ENCODE measurements at regions of chr1 and their contacts with region 1.

Region 1: DNA sequence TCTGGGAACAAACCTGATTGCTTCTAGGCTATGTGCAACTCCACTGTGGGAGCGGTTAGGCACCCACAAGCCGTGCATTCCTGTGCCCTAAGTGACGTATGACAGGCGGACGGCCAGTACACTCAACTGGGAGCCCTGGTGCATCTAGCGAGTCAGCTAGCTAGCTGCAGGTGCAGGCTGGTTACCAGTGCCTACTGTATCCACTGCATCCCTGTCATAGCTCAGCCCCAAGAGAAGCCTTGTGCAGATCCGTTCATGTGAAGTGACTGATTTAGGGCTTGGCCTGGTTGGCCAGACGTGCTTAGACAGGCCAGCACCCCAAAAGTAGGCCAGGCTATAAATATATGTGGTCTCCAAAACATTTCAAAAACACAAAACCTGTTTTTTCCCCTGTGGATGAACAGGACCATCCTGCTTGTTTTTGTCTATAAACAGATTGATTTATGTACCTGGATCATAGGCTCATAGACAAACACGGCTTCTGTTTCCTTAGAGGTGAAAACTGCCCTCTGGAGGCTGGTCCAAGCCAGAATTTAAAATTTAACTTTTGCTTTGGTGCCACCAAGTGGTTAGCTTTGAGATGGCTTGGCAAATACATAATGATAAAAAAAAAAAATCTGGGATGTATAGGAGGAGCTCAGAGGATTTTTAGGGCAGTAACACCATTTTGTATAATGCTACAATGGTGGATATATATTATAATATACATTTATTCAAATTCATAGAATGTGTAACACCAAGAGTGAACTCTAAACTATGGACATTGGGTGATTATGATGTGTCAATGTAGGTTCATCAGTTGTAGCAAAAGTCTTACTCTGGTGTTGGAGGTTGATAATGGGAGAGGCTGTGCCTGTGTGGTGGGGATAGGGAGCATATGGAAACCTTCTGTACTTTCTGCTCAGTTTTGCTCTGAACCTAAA is 68.5 kb downstream of the GIPC2 start:
- DNase-seq: peak; percentile 21 to 78 (median 52)
- ATAC-seq: peak; percentile 97
- H3K4me3 ChIP-seq: no peak overlapping the region
- H3K4me3 Mint-ChIP-seq: no peak overlapping the region
- H3K27ac ChIP-seq: no peak overlapping the region
- H3K27ac Mint-ChIP-seq: no peak overlapping the region
- H3K4me1 ChIP-seq: no peaks in the 10 kb centered on the region
- H3K4me1 Mint-ChIP-seq: no peaks in the 10 kb centered on the region
- H3K27me3 ChIP-seq: no peaks in the 10 kb centered on the region
- H3K27me3 Mint-ChIP-seq: no peaks in the 10 kb centered on the region
- CTCF ChIP-seq: peak; percentile 99

Region 2: GRCh38 chr1:76330991-76331603 is 1783.2 kb before region 1 on chr1:
- CTCF ChIA-PET with region 1: no interaction called
- POLR2A ChIA-PET with region 1: no interaction called
- intact Hi-C with region 1: loop called in 1 of 2 experiments (anchors 10 kb)
- DNase-seq: peak in 5 of 9 experiments; percentile 12 to 59 (median 33)
- ATAC-seq: peak; percentile 71
- H3K4me3 ChIP-seq: no peak overlapping the region
- H3K4me3 Mint-ChIP-seq: no peak overlapping the region
- H3K27ac ChIP-seq: no peak overlapping the region
- H3K27ac Mint-ChIP-seq: no peak overlapping the region
- H3K4me1 ChIP-seq: no peaks in the 10 kb centered on the region
- H3K4me1 Mint-ChIP-seq: peaks cover 4% of the 10 kb centered on the region
- H3K27me3 ChIP-seq: no peaks in the 10 kb centered on the region
- H3K27me3 Mint-ChIP-seq: no peaks in the 10 kb centered on the region
- CTCF ChIP-seq: peak; percentile 91

Region 3: DNA sequence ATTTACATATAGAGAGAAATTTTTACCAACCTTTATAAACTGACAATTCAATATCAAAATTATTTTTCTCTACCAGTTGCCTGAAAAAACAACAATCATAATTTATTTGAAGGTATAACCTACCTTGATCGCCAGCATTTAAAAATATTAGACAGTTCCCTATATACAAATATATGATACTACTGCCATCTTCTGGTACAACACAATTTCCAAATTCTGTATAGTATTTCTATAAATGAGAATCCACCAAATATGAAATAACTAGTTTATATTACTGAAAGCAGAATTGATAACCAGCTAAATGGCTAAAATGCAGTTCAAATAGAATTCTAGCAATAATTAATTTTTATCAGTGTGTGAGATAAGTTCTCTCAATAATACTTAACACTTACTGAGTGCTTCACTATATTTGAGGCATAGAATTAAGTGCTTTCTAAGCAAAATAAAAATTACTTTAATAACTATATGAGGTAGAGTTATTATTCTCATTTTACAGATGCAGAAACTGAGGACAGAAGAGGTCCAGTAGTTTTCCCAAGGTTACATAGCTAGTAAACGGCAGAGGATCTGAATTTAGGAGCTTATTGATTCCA is 970.7 kb before region 1 on chr1:
- CTCF ChIA-PET with region 1: no interaction called
- POLR2A ChIA-PET with region 1: no interaction called
- intact Hi-C with region 1: loop called (anchors 1 to 2 kb)
- DNase-seq: peak in 2 of 9 experiments; percentile 15 to 28
- ATAC-seq: no peak
- H3K4me3 ChIP-seq: no peak overlapping the region
- H3K4me3 Mint-ChIP-seq: no peak overlapping the region
- H3K27ac ChIP-seq: no peak overlapping the region
- H3K27ac Mint-ChIP-seq: no peak overlapping the region
- H3K4me1 ChIP-seq: peaks cover 6% of the 10 kb centered on the region
- H3K4me1 Mint-ChIP-seq: peaks cover 5% of the 10 kb centered on the region
- H3K27me3 ChIP-seq: no peaks in the 10 kb centered on the region
- H3K27me3 Mint-ChIP-seq: no peaks in the 10 kb centered on the region
- CTCF ChIP-seq: peak; percentile 53

Region 4: GRCh38 chr1:77718181-77718580 is 396.1 kb before region 1 on chr1:
- CTCF ChIA-PET with region 1: no interaction called
- POLR2A ChIA-PET with region 1: no interaction called
- intact Hi-C with region 1: loop called in 1 of 2 experiments (anchors 5 kb)
- DNase-seq: no peak
- ATAC-seq: no peak
- H3K4me3 ChIP-seq: no peak overlapping the region
- H3K4me3 Mint-ChIP-seq: no peak overlapping the region
- H3K27ac ChIP-seq: no peak overlapping the region
- H3K27ac Mint-ChIP-seq: no peak overlapping the region
- H3K4me1 ChIP-seq: no peaks in the 10 kb centered on the region
- H3K4me1 Mint-ChIP-seq: no peaks in the 10 kb centered on the region
- H3K27me3 ChIP-seq: no peaks in the 10 kb centered on the region
- H3K27me3 Mint-ChIP-seq: no peaks in the 10 kb centered on the region
- CTCF ChIP-seq: no peak

Region 5: DNA sequence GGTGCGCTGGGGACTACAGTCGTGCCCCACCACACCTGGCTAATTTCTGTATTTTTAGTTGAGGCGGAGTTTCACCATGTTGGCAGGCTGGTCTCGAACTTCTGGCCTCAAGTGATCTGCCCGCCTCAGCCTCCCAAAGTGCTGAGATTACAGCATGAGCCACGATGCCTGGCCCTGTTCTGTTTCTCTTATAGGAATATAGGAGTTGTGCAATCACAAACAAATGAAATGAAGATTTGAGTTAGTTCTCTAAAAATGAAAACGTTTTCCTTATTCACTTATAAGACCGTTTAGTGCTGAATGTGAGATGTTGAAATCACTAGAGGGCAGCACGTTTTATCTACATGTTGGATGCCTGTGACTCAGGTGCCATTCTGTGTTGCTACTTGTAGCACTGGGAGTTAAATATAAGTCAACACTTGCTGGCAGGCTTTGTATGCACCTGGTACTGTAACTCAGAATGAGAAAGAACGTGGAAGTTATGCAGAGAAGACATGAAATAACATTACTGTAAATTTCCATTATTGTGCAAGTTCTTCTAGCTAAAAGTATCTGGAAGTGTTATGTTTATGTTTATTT is 289.1 kb before region 1 on chr1:
- CTCF ChIA-PET with region 1: interaction called, 7 read pairs
- POLR2A ChIA-PET with region 1: no interaction called
- intact Hi-C with region 1: loop called in 1 of 2 experiments (anchors 5 kb)
- DNase-seq: peak in 2 of 9 experiments; percentile 20 to 41
- ATAC-seq: no peak
- H3K4me3 ChIP-seq: no peak overlapping the region
- H3K4me3 Mint-ChIP-seq: no peak overlapping the region
- H3K27ac ChIP-seq: no peak overlapping the region
- H3K27ac Mint-ChIP-seq: no peak overlapping the region
- H3K4me1 ChIP-seq: no peaks in the 10 kb centered on the region
- H3K4me1 Mint-ChIP-seq: peaks cover 4% of the 10 kb centered on the region
- H3K27me3 ChIP-seq: no peaks in the 10 kb centered on the region
- H3K27me3 Mint-ChIP-seq: no peaks in the 10 kb centered on the region
- CTCF ChIP-seq: no peak

Region 6: DNA sequence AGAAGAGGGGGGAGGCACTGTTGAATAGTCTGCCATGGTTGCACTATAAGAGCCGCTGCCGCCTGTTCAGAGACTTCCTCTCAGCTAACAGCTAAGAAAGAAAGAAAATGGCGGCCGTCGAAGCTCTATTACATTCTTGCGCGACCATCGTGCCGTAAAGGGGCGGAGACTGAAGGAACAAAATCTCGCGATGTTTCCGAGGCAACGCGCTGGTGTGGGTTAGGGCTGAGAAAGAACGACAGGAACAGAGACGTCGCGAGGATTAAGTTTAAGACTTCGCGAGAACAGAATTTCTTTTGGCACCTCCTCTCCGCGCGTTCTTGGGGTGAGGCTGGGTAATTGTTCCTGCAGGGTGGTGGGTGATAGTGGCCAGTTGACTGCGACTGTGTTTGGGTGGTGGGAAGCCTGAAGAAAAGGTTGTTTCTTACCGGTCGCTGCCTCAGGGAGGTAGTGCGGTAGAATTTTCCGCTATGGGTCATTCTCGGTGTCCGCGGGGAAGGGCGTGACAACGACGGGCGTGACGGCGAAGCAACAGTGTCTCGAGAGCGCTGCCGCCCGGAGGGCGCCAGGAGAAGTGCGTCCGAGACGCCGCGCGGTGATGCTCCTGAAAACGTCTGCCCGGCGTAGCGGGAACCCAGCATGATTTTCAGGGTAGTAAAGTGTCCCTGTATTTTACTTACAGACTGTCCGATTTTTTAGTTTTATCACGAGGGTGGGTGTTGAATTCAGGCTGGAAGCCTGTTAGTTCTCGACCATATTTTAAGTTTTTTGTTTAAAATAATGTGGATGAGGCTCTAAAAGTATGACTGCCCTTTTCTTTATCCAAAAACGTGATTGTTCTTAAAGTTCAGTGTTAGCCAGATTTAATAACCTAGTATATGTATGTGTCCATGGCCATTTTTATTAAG is 135.1 kb before region 1 on chr1 and contains the start of gene FUBP1:
- CTCF ChIA-PET with region 1: no interaction called
- POLR2A ChIA-PET with region 1: no interaction called
- intact Hi-C with region 1: loop called (anchors 2 to 5 kb)
- DNase-seq: peak; percentile 91 to 99 (median 94)
- ATAC-seq: peak; percentile 75
- H3K4me3 ChIP-seq: peak within 1 kb of the TSS; percentile 88 to 99
- H3K4me3 Mint-ChIP-seq: no peak within 1 kb of the TSS
- H3K27ac ChIP-seq: peak within 1 kb of the TSS; percentile 98 to 100
- H3K27ac Mint-ChIP-seq: no peak within 1 kb of the TSS
- H3K4me1 ChIP-seq: peaks cover 45% of the 10 kb centered on the region
- H3K4me1 Mint-ChIP-seq: peaks cover 45% of the 10 kb centered on the region
- H3K27me3 ChIP-seq: no peaks in the 10 kb centered on the region
- H3K27me3 Mint-ChIP-seq: no peaks in the 10 kb centered on the region
- CTCF ChIP-seq: peak; percentile 75
- total RNA-seq, gene FUBP1: 212 to 217 TPM

Region 7: GRCh38 chr1:78145105-78145580 is 30.8 kb after region 1 on chr1:
- CTCF ChIA-PET with region 1: no interaction called
- POLR2A ChIA-PET with region 1: no interaction called
- intact Hi-C with region 1: no loop called
- DNase-seq: peak in 5 of 9 experiments; percentile 7 to 56 (median 34)
- ATAC-seq: peak; percentile 40
- H3K4me3 ChIP-seq: no peak overlapping the region
- H3K4me3 Mint-ChIP-seq: no peak overlapping the region
- H3K27ac ChIP-seq: no peak overlapping the region
- H3K27ac Mint-ChIP-seq: no peak overlapping the region
- H3K4me1 ChIP-seq: peaks cover 10% of the 10 kb centered on the region
- H3K4me1 Mint-ChIP-seq: peaks cover 19% of the 10 kb centered on the region
- H3K27me3 ChIP-seq: no peaks in the 10 kb centered on the region
- H3K27me3 Mint-ChIP-seq: peaks cover 16% of the 10 kb centered on the region
- CTCF ChIP-seq: peak; percentile 63

Measured in CD8-positive, alpha-beta T cell (primary cell).